SK-N-SH (cell line): ENCODE measurements at regions of chr17 and their contacts with region 1.

Region 1: DNA sequence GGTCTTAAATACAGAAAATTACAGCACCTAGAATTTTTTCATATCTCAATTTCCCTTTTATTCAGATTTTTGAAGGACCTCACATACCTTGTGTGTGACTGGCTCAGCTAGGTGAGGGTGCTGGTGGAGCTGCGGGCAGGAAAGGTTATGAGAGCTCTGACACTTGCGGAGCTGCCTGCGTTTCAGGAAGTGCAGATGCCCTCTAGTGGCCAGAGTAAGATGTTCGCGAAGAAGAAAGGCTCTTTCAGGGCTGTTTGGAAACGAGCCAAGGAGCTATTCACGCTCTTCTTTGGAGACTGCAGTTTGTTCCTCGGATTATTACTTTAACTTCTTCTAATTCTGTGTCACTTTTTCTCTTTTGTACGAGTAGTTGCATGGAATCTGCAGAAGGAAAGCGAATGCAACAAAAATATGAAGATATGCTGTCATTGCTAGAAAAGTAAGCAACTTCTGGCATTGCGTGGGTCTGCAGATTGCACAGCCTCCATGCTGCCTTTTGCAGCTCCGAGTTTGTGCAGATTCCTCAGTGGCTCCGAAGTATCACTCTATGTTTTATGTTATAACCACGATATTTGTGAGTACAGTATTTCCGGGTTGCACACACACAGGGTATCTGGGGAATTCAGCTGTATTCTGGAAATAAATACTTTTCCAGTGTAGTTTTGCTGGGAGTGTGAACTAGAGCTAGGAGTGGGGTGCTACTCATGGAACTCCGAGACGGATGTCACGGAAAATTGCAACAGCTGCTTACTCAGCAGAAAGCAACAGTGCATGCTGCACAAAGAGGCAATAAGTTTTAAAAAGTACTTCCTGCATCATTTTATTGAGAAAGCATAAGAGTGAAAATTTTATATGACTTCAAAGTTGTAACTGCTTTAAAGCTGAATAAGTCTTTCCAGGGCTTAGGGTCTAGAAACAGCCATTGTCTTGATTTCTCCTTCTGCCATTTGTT is 46.3 kb downstream of the DNAH9 start:
- DNase-seq: peak; percentile 70
- H3K4me3 ChIP-seq: peak overlapping the region in 1 of 2 experiments; percentile 32; a peak in 1 of 4 replicates
- H3K27ac ChIP-seq: no peak overlapping the region
- H3K4me1 ChIP-seq: peaks cover 0 to 2% of the 10 kb centered on the region in 2 experiments; a peak in 1 of 4 replicates
- H3K27me3 ChIP-seq: no peaks in the 10 kb centered on the region
- CTCF ChIP-seq: peak; percentile 64
- EP300 ChIP-seq: no peak
- RAD21 ChIP-seq: peak; percentile 84

Region 2: DNA sequence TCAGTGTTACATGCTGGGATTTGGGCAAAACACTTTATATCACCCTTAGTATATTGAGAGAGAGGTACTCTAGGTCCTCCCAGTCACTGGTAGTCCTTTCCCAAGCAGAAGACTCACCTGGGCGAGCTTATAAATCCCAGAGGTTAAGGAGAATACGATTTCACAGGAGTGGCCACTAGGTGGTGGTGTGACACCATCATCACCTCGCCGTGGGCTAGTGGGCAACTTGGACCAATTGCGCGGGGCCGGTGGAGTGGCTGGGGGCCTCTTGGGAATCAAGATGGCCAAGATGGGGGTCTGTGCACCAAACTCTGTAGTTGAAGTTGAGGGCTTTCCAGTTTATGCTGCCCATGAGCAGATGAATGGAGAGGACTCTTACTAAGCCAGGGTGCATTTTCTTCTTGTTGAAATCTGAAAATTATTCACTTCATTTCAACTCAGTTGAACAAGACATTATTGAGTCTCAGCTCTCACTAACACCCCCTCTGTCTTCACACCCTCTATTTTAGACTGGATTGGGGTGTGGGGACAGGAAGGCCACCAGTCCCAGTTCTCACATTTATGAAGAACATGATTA is 768.5 kb before region 1 on chr17:
- CTCF ChIA-PET with region 1: interaction called, 11 read pairs
- POLR2A ChIA-PET with region 1: no interaction called
- DNase-seq: peak; percentile 58
- H3K4me3 ChIP-seq: no peak overlapping the region; a peak in 1 of 4 replicates
- H3K27ac ChIP-seq: no peak overlapping the region
- H3K4me1 ChIP-seq: no peaks in the 10 kb centered on the region
- H3K27me3 ChIP-seq: no peaks in the 10 kb centered on the region
- CTCF ChIP-seq: peak; percentile 55
- EP300 ChIP-seq: no peak
- RAD21 ChIP-seq: peak; percentile 77

Region 3: DNA sequence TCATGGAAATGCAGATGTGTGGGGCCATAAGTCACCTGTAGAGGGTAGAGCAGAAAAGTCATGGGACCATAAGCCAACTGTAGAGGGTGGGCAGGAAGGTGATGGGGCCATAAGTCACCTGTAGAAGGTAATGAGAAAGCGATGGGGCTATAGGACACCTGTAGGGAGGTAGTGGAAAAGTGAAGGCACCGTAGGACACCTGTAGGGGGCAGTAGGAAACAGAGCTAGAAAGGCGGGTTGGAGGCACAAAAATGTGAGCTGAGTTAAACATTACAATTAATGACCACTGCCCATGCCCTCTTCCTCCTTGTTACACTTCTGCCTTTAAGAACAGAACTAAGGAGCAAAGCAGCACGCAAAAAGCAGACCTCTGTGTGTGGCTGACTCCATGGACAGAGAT is 253.4 kb before region 1 on chr17:
- CTCF ChIA-PET with region 1: interaction called, 13 read pairs
- POLR2A ChIA-PET with region 1: no interaction called
- DNase-seq: peak; percentile 19
- H3K4me3 ChIP-seq: no peak overlapping the region
- H3K27ac ChIP-seq: no peak overlapping the region
- H3K4me1 ChIP-seq: no peaks in the 10 kb centered on the region
- H3K27me3 ChIP-seq: no peaks in the 10 kb centered on the region
- CTCF ChIP-seq: no peak
- EP300 ChIP-seq: no peak
- RAD21 ChIP-seq: peak; percentile 58

Region 4: GRCh38 chr17:11598274-11599221 is 46.0 kb before region 1 on chr17 and contains the start of gene DNAH9:
- CTCF ChIA-PET with region 1: interaction called, 13 read pairs
- POLR2A ChIA-PET with region 1: interaction called, 3 read pairs
- DNase-seq: peak; percentile 92
- H3K4me3 ChIP-seq: peak within 1 kb of the TSS in 1 of 2 experiments; percentile 55; a peak in 2 of 4 replicates
- H3K27ac ChIP-seq: peak within 1 kb of the TSS in 1 of 2 experiments; percentile 78; a peak in 2 of 4 replicates
- H3K4me1 ChIP-seq: peaks cover 0 to 9% of the 10 kb centered on the region in 2 experiments; a peak in 2 of 4 replicates
- H3K27me3 ChIP-seq: no peaks in the 10 kb centered on the region
- CTCF ChIP-seq: no peak
- EP300 ChIP-seq: no peak
- RAD21 ChIP-seq: no peak
- polyA plus RNA-seq, gene DNAH9: 0.05 TPM in 1 of 2 replicates, not detected in the other

Region 5: GRCh38 chr17:11610999-11611566 is 33.5 kb before region 1 on chr17:
- CTCF ChIA-PET with region 1: interaction called, 30 read pairs
- POLR2A ChIA-PET with region 1: no interaction called
- DNase-seq: peak; percentile 66
- H3K4me3 ChIP-seq: no peak overlapping the region
- H3K27ac ChIP-seq: peak overlapping the region in 1 of 2 experiments; percentile 99; a peak in 2 of 4 replicates
- H3K4me1 ChIP-seq: peaks cover 0 to 50% of the 10 kb centered on the region in 2 experiments; a peak in 3 of 4 replicates
- H3K27me3 ChIP-seq: no peaks in the 10 kb centered on the region
- CTCF ChIP-seq: no peak
- EP300 ChIP-seq: peak in 1 of 2 experiments; percentile 75; a peak in 1 of 4 replicates
- RAD21 ChIP-seq: no peak

Region 6: DNA sequence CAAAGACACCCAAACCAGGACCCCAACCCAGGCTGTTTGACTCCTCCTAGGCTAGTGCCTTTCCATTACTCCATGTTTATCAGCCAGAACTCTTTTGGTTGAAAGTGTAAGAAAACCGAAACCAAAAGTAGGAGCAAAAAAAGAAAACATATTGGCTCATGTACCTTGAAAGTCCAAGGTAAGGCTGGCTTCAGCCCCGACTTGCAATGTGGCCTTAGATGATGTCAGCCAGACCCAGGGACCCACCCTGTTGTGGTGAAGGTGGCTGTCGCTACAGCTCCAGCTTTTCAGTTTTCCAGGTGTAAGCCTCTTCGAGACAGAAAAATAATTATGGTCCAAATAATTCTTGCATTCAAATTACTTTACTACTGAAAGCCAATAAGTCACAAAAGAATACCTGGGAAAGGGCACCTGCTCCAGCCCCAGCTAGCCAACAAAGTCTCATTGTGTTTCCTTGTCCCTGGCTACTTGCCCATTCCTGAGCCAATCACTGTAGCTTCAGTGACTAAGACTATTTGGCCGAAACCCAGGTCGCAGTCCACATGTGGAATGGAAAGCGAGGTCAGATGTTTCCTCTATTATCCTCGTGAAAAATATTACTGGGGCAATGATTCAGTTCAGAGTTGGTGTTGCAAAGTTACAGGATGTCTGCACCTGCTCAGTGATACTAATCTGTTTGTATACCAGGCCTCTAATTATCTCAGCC is 25.5 kb before region 1 on chr17:
- CTCF ChIA-PET with region 1: interaction called, 22 read pairs
- POLR2A ChIA-PET with region 1: no interaction called
- DNase-seq: no peak
- H3K4me3 ChIP-seq: no peak overlapping the region
- H3K27ac ChIP-seq: no peak overlapping the region
- H3K4me1 ChIP-seq: peaks cover 0 to 8% of the 10 kb centered on the region in 2 experiments; a peak in 1 of 4 replicates
- H3K27me3 ChIP-seq: no peaks in the 10 kb centered on the region
- CTCF ChIP-seq: no peak
- EP300 ChIP-seq: no peak
- RAD21 ChIP-seq: no peak

Region 7: DNA sequence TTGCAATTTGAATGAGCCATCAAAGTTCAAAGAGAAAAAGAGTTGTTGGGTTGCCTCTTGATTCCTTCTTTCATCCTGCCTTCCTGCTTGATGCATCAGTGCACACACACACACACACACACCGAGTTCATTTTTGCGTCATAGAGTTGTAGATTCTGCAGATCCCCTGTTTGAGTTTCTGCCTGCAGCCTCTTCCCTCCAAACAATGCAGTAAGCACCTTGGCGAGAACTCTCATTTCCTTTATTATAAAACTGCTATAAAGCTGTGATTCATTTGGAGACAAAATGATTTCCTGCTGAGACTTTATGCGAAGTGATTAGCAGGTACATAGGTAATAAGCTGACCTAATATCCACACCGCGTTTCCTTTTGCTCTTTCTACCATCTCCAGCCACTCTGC is 19.6 kb before region 1 on chr17:
- CTCF ChIA-PET with region 1: interaction called, 22 read pairs
- POLR2A ChIA-PET with region 1: no interaction called
- DNase-seq: no peak
- H3K4me3 ChIP-seq: no peak overlapping the region
- H3K27ac ChIP-seq: no peak overlapping the region
- H3K4me1 ChIP-seq: peaks cover 0 to 6% of the 10 kb centered on the region in 2 experiments; a peak in 1 of 4 replicates
- H3K27me3 ChIP-seq: no peaks in the 10 kb centered on the region
- CTCF ChIP-seq: no peak
- EP300 ChIP-seq: no peak
- RAD21 ChIP-seq: no peak

Region 8: GRCh38 chr17:11768106-11768505 is 123.6 kb after region 1 on chr17:
- CTCF ChIA-PET with region 1: no interaction called
- POLR2A ChIA-PET with region 1: no interaction called
- DNase-seq: no peak
- H3K4me3 ChIP-seq: no peak overlapping the region
- H3K27ac ChIP-seq: no peak overlapping the region
- H3K4me1 ChIP-seq: no peaks in the 10 kb centered on the region
- H3K27me3 ChIP-seq: no peaks in the 10 kb centered on the region
- CTCF ChIP-seq: no peak
- EP300 ChIP-seq: no peak
- RAD21 ChIP-seq: no peak